Activated CD8-positive, alpha-beta T cell treated with anti-CD3 and anti-CD28 coated beads for 36 hours (primary cell): ENCODE measurements at regions of chr22 and their contacts with region 1.

Region 1: DNA sequence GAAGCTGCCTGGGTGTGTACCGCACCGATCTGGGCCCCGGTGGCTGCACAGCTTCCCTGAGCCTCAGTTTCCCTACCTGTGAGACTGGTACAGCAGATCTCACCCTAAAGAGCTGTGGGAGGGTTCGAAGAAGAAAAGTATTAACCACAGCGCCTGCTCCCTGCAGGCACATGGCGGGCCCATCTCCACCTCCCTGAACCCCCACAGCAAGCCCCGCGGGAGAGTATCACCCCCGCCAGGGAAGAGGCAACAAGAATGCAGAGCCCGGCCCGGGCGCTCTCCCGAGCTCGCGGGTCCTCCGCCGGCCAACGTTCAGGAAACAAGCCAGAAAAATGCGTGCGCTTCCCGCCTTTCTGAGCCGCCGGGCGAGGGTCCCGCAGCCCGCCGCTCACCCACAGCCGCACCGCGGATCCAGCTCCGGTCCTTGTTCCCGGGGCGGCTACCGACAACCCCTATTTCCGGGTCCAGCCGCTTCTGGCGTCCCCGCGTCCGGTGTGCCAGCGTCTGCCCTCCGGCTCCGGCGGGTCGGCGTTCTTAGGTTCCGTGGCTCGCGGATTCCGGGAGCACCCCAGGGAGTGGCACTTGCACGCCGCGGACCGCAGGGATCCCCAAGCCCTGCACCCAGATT is at the start of gene TOP3B:
- DNase-seq: peak; percentile 86
- ATAC-seq: peak; percentile 97
- H3K4me3 Mint-ChIP-seq: peak within 1 kb of the TSS; percentile 88
- H3K27ac Mint-ChIP-seq: peak within 1 kb of the TSS; percentile 83
- H3K4me1 Mint-ChIP-seq: peaks cover 35% of the 10 kb centered on the region
- H3K27me3 Mint-ChIP-seq: no peaks in the 10 kb centered on the region
- CTCF ChIP-seq: no peak
- total RNA-seq, gene TOP3B: 33.6 to 34.0 TPM

Region 2: DNA sequence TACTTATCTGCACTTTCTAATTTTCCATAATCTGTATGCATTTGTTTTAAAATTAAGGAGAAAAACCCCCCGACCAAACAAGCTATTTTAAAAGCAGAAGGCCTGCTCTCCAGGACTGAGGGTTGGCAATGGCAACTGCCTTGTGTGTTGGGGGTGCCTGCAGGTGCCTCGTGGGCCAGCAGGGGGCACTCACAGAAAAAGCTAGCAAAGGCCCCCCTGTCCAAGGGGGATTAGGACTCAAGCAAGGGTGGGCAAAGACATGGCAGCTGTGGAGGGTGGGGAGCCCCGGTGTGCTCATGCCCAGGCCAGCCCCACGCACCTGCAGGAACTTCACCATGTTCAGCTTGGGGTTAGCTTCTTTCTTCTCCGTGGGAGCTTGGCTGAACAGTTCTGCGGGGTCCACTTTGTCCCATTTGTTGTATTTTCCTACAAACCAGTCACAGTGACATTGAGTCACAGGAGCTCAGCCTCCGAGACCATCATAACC is 10.1 kb before region 1 on chr22:
- CTCF ChIA-PET with region 1: interaction called, 27 read pairs
- POLR2A ChIA-PET with region 1: interaction called, 14 read pairs
- intact Hi-C with region 1: no loop called
- DNase-seq: peak; percentile 70
- ATAC-seq: peak; percentile 88
- H3K4me3 Mint-ChIP-seq: no peak overlapping the region
- H3K27ac Mint-ChIP-seq: no peak overlapping the region
- H3K4me1 Mint-ChIP-seq: no peaks in the 10 kb centered on the region
- H3K27me3 Mint-ChIP-seq: no peaks in the 10 kb centered on the region
- CTCF ChIP-seq: peak; percentile 84

Region 3: DNA sequence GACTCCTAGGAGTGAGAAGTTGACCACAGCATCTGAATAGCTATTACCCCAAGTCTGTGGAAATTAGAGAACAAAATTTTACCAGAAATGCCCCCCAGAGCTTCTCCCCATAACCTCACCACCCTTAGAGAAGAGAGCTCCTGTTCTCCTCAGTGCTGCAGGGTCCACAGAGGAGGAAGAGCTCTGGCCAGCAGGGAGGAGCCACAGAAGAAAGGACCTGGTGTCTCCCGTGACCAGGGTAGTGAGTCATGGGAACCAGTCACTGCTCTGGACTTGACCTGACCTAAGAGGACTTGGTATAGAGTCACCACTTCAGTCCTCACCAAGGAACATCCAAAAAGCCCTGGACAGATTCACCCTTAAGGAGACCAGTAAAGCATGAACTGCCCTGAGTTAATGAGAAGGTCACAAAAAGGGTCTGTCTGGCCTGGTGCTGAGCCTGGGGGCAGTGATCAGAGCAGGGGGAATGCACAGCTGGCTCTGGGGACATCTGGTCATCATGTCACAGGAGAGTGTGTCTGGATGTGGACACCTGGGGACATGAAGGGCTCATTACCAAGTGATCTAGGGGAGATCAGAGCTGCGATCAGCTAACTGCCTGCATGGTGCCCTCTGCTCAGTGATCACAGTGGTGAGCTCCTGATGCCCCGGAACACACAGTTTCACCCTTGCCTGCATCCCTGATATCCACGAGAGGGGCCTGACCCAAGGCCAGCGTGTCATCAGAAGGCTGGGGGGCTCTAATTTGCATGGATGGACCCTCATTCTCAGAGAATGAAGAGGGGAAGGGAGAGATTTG is 103.4 kb after region 1 on chr22:
- CTCF ChIA-PET with region 1: no interaction called
- POLR2A ChIA-PET with region 1: no interaction called
- intact Hi-C with region 1: no loop called
- DNase-seq: no peak
- ATAC-seq: no peak
- H3K4me3 Mint-ChIP-seq: no peak overlapping the region
- H3K27ac Mint-ChIP-seq: no peak overlapping the region
- H3K4me1 Mint-ChIP-seq: no peaks in the 10 kb centered on the region
- H3K27me3 Mint-ChIP-seq: peaks cover 16% of the 10 kb centered on the region
- CTCF ChIP-seq: no peak